ENCODE measurements at regions of chr13 and their contacts with region 1.

Region 1: GRCh38 chr13:108342369-108343289 is 73.1 kb downstream of the TNFSF13B start:
- DNase-seq: peak; percentile 32

Region 2: GRCh38 chr13:108895220-108895704 is 552.6 kb after region 1 on chr13:
- in situ Hi-C with region 1: loop called (anchors 25 kb)
- DNase-seq: peak; percentile 40

Measured in KBM-7 (cell line).